Activated B cell treated with CpG ODN at 0.5 μM for 24 hours (primary cell): ENCODE measurements at regions of chr2 and their contacts with region 1.

Region 1: DNA sequence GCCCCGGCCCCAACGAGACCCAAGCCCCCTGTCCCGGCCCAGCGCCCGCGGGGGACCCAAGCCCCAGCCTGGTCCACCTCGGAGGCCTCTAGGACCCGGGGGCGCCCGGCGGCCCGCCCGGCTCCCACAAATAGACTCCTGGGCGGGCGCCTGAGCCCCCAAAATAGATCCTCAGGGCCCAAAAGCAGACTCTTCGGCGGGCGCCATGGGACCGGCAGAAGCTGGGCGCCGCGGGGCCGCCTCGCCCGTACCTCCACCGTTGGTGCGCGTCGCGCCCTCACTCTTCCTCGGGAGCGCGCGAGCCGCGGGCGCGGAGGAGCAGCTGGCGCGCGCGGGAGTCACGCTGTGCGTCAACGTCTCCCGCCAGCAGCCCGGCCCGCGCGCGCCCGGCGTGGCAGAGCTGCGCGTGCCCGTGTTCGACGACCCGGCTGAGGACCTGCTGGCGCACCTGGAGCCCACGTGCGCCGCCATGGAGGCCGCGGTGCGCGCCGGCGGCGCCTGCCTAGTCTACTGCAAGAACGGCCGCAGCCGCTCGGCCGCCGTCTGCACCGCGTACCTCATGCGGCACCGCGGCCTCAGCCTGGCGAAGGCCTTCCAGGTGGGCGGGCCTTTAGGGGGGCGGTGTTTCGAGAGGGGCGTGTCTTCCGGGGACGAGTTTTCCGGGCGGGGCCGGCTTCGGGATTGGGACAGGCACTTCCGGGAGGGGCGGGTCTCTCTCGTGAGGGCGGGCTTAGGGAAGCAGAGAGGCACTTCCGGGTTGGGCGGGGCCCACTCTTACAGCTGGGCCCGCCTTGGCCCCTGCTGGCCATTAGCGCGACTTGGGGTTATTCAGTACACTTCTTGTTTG is 546 bp downstream of the DUSP28 start:
- DNase-seq: peak; percentile 99
- ATAC-seq: peak; percentile 70
- H3K4me3 Mint-ChIP-seq: peak overlapping the region; percentile 81
- H3K27ac Mint-ChIP-seq: peak overlapping the region; percentile 89
- H3K4me1 Mint-ChIP-seq: peaks cover 77% of the 10 kb centered on the region
- H3K27me3 Mint-ChIP-seq: no peaks in the 10 kb centered on the region
- CTCF ChIP-seq: no peak

Region 2: GRCh38 chr2:240513549-240514287 is 47.0 kb before region 1 on chr2:
- CTCF ChIA-PET with region 1: interaction called, 22 read pairs
- POLR2A ChIA-PET with region 1: interaction called, 12 read pairs
- intact Hi-C with region 1: loop called (anchors 1 kb)
- DNase-seq: peak; percentile 71
- ATAC-seq: peak; percentile 99
- H3K4me3 Mint-ChIP-seq: peak overlapping the region; percentile 28
- H3K27ac Mint-ChIP-seq: peak overlapping the region; percentile 59
- H3K4me1 Mint-ChIP-seq: peaks cover 17% of the 10 kb centered on the region
- H3K27me3 Mint-ChIP-seq: no peaks in the 10 kb centered on the region
- CTCF ChIP-seq: peak; percentile 23

Region 3: DNA sequence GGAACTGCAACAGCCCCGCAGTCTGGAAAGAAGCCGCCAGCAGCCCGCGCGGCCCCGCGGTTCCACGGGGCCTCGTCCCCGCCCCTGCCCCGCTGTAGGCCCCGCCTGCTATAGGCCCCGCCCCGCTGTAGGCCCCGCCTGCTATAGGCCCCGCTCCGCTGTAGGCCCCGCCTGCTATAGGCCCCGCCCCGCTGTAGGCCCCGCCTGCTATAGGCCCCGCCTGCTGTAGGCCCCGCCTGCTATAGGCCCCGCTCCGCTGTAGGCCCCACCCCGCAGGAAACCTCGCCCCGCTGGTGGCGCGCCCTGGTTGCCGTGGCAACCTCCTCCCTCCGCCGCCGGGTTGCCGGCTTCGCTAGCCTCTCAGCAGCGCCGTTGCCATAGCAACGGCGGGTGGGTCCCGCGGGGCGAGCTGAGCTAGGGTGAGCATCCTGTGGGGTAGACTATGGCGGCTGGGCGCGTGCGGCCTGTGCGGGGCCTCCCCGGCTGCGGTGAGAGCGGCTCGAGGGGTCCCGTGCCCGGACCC is 271.6 kb after region 1 on chr2:
- CTCF ChIA-PET with region 1: no interaction called
- POLR2A ChIA-PET with region 1: no interaction called
- intact Hi-C with region 1: loop called (anchors 1 kb)
- DNase-seq: peak; percentile 89
- ATAC-seq: peak; percentile 94
- H3K4me3 Mint-ChIP-seq: peak overlapping the region; percentile 55
- H3K27ac Mint-ChIP-seq: no peak overlapping the region
- H3K4me1 Mint-ChIP-seq: peaks cover 5% of the 10 kb centered on the region
- H3K27me3 Mint-ChIP-seq: peaks cover 18% of the 10 kb centered on the region
- CTCF ChIP-seq: no peak

Region 4: GRCh38 chr2:241217320-241218031 is 656.8 kb after region 1 on chr2:
- CTCF ChIA-PET with region 1: no interaction called
- POLR2A ChIA-PET with region 1: no interaction called
- intact Hi-C with region 1: loop called (anchors 10 kb)
- DNase-seq: peak; percentile 53
- ATAC-seq: peak; percentile 73
- H3K4me3 Mint-ChIP-seq: peak overlapping the region; percentile 83
- H3K27ac Mint-ChIP-seq: peak overlapping the region; percentile 73
- H3K4me1 Mint-ChIP-seq: peaks cover 10% of the 10 kb centered on the region
- H3K27me3 Mint-ChIP-seq: no peaks in the 10 kb centered on the region
- CTCF ChIP-seq: no peak

Region 5: DNA sequence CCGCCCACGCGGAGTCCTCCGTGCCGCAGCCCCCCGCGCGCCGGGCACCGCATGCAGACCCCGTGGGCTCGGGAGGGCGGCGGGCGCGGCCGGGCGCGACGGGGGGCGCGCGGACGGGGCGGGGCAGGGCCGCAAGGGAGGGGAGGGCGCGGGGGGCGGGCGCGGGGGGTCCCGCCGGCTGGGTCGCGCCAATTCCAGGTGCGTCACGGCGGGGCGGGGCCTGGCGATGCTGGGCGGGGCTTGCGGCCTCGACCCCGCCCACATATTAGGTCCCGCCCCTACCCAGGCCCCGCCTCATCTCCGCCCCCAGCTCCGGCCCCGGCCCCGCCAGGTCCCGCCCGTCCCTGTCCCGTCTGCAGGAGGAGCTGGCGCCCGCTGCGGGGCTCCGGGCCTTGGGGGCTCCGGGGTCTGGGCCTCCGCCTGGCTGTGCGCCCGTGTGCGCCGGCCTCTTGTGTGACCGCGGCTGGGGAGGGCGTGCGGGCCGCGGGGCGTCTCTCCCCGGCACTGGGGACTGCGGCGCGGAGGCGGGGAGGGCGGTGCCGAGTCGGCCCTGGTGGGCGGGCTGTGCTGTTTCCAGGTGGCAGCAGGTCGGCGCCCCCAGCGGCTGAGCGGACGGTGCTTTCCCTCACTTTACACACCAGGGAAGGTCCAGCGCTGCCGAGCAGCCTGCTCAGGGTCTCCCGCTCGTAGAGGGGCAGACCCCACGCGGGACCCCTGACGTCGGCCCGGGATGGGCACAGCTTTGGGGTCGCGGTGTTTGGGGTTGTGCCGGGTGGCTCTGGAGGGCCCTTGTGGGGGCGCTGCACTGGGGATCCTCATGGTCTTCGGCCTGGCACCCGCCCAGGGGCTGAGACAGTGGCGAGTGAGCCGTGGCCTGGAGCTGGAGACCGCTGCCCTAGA is 1141.7 kb after region 1 on chr2:
- CTCF ChIA-PET with region 1: no interaction called
- POLR2A ChIA-PET with region 1: interaction called, 3 read pairs
- intact Hi-C with region 1: loop called (anchors 1 kb)
- DNase-seq: peak; percentile 93
- ATAC-seq: peak; percentile 73
- H3K4me3 Mint-ChIP-seq: peak overlapping the region; percentile 82
- H3K27ac Mint-ChIP-seq: peak overlapping the region; percentile 79
- H3K4me1 Mint-ChIP-seq: peaks cover 26% of the 10 kb centered on the region
- H3K27me3 Mint-ChIP-seq: no peaks in the 10 kb centered on the region
- CTCF ChIP-seq: no peak